Heart left ventricle (tissue), 16 donors: ENCODE measurements at regions of chr11 and their contacts with region 1.

Region 1: DNA sequence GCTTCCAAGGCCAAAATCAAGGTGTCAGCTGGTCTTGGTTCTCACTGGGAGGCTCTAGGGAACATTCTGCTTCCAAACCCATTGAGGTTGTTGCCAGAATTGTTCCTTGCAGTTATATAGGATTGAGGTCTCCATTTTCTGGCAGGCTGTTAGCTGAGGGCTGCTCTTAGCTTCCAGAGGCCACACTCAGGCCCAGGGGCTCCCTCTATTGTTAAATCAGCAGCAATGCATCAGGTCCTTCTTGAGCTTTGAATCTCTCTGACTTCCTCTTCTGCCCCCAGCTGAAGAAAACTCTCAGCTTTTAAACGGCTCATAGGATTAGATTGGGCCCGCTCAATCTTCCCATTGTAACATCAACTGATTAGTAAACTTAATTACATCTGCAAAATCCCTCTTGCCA is 39.3 kb upstream of the BSX start:
- DNase-seq: peak in 1 of 5 donors; percentile 11
- ATAC-seq: peak in 2 of 4 donors; percentile 41 to 44
- H3K4me3 ChIP-seq: no peak overlapping the region
- H3K27ac ChIP-seq: no peak overlapping the region
- H3K4me1 ChIP-seq: peaks cover 0 to 7% (median 0%) of the 10 kb centered on the region in 12 donors
- H3K27me3 ChIP-seq: peaks cover 0 to 13% (median 3%) of the 10 kb centered on the region in 9 donors
- CTCF ChIP-seq: peak; percentile 17 to 60 (median 46)
- POLR2A ChIP-seq: no peak

Region 2: DNA sequence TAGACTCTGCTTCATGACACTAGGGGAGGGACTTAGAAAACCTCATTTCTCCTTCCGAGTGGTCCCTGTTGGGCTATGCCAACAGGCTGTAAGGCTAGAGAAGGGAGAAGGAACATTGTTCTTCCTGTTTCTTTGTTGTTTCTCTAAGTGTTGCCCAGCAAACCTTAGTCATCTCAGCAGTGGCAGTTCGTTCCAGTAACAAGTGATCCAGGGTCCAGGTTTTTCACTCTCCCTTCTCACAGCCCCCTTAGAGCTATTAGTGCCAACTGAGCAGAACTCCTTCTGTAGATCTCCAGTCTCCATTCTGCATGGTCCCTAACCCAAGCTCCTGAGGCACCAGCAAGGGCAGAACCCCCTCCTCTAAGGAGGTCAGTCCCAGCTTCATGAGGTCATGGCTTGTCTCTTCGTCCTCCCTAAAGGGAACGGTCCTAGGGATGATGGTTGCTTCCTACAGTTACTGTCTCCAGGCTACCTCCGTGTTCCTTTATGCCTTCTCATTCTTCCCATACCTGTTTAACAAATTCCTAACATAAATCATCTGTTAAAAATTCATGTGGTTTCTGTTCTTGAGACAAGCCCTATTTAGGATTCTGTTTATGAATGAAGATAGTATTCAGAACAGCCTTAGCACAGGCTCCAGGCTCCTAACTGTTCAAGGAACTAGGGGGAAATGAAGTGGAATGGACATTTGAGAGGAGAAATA is 534.0 kb before region 1 on chr11:
- intact Hi-C with region 1: no loop called
- DNase-seq: no peak
- ATAC-seq: no peak
- H3K4me3 ChIP-seq: no peak overlapping the region
- H3K27ac ChIP-seq: no peak overlapping the region
- H3K4me1 ChIP-seq: peaks cover 0 to 16% (median 9%) of the 10 kb centered on the region in 12 donors
- H3K27me3 ChIP-seq: no peaks in the 10 kb centered on the region
- CTCF ChIP-seq: no peak
- POLR2A ChIP-seq: no peak

Region 3: DNA sequence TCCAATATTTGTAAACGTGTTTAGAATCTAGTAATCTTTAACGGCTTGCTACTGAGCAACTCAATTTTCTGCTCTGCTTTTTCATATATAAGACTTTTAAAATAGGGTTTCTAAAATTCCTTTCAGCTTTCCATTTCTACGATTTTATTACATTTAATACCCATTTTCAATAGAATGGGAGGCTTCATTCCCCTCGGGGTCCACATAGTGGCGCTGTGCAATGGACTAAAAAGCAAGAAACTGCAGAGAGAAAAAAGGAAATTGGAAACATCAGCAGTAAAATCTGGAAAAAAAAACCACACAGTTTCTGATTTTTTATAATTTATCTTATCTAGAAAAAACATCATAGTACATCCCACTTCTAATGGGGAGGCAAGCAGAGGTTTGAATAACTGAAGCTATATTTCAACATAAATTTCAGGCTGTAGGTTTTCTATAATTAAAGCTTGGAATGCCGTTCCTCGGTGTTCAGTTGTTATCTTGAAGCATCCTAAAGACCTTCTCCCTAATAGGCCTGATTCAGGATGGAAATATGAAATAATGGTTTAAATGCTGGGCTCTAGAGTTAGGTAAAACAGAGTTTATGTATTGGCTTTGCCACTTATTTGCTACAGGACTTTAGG is 157.2 kb before region 1 on chr11:
- intact Hi-C with region 1: loop called (anchors 1 to 5 kb)
- DNase-seq: peak in 3 of 5 donors; percentile 18 to 36 (median 28)
- ATAC-seq: no peak
- H3K4me3 ChIP-seq: peak overlapping the region in 2 of 12 donors; percentile 6 to 21
- H3K27ac ChIP-seq: peak overlapping the region in 1 of 12 donors; percentile 57
- H3K4me1 ChIP-seq: peaks cover 0 to 7% (median 0%) of the 10 kb centered on the region in 12 donors
- H3K27me3 ChIP-seq: peaks cover 0 to 64% (median 13%) of the 10 kb centered on the region in 9 donors
- CTCF ChIP-seq: peak; percentile 61 to 89 (median 74)
- POLR2A ChIP-seq: no peak

Region 4: DNA sequence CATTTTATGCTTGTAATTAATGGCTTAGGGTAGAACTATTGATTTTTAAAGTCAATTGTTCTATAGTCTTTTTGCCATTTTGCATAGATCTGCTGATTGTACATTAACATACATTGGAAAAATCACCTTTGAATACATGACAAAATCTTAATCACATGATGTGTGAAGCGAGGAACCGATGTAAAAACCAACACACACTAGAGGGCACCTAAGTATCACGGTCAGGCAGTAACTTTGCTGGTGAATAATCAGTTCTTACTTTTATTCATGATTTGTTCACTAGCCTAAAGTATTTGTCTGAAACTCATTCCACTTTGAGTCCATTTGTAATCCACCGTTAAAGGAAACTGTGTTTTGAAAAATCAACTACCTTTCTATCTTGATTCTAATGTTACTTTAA is 110.2 kb before region 1 on chr11:
- intact Hi-C with region 1: loop called in 7 of 10 experiments (anchors 2 to 10 kb)
- DNase-seq: no peak
- ATAC-seq: no peak
- H3K4me3 ChIP-seq: no peak overlapping the region
- H3K27ac ChIP-seq: no peak overlapping the region
- H3K4me1 ChIP-seq: no peaks in the 10 kb centered on the region
- H3K27me3 ChIP-seq: peaks cover 0 to 2% (median 0%) of the 10 kb centered on the region in 9 donors
- CTCF ChIP-seq: peak in 10 of 12 donors; percentile 8 to 48 (median 42)
- POLR2A ChIP-seq: no peak

Region 5: DNA sequence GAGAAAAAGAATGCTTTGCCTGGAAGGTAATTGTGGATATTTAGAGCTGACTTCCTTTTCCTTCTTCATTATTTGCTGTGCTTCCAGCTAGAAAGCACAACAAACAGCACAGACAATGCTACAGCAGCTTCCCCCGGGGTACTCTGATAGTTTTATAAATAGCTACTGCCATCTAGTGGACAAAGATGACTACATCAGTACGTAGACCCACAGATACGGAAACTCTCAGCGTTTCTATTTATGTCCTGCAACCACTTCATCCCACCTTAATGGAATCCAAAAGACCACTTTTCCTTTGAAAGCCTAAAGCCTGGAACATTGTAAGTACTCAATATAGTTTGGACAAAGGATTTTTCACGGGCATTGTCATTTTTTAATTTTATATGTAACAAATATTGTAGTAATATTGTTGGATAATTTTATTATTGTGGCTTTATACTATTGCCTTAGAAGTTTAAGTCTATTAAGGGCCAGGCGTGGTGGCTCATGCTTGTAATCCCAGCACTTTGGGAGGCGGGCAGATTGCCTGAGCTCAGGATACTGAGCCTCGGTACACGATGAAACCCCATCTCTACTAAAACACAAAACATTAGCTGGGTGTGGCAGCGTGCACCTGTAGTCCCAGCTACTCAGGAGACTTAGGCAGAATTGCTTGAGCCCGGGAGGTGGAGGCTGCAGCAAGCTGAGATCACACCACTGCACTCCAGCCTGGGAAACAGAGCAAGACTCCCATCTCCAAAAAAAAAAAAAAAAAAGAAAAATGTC is 33.5 kb after region 1 on chr11:
- intact Hi-C with region 1: no loop called
- DNase-seq: no peak
- ATAC-seq: peak; percentile 72 to 89 (median 82)
- H3K4me3 ChIP-seq: no peak overlapping the region
- H3K27ac ChIP-seq: no peak overlapping the region
- H3K4me1 ChIP-seq: peaks cover 0 to 56% (median 48%) of the 10 kb centered on the region in 12 donors
- H3K27me3 ChIP-seq: no peaks in the 10 kb centered on the region
- CTCF ChIP-seq: peak; percentile 62 to 83 (median 72)
- POLR2A ChIP-seq: no peak